CD4-positive, alpha-beta memory T cell (primary cell): ENCODE measurements at regions of chr4 and their contacts with region 1.

Region 1: GRCh38 chr4:139229534-139230039 is 50.4 kb downstream of the MGARP start:
- DNase-seq: peak in 4 of 5 donors; percentile 42 to 54 (median 48)
- H3K4me3 ChIP-seq: no peak overlapping the region
- H3K4me3 Mint-ChIP-seq: no peak overlapping the region
- H3K27ac ChIP-seq: no peak overlapping the region
- H3K27ac Mint-ChIP-seq: no peak overlapping the region
- H3K4me1 ChIP-seq: no peaks in the 10 kb centered on the region
- H3K4me1 Mint-ChIP-seq: peaks cover 0 to 3% (median 1%) of the 10 kb centered on the region in 4 donors
- H3K27me3 ChIP-seq: no peaks in the 10 kb centered on the region
- H3K27me3 Mint-ChIP-seq: no peaks in the 10 kb centered on the region

Region 2: GRCh38 chr4:139099366-139099982 is 130.1 kb before region 1 on chr4:
- CTCF ChIA-PET with region 1: interaction called, 5 read pairs
- POLR2A ChIA-PET with region 1: no interaction called
- intact Hi-C with region 1: loop called (anchors 1 kb)
- DNase-seq: peak; percentile 70 to 78 (median 73)
- H3K4me3 ChIP-seq: no peak overlapping the region
- H3K4me3 Mint-ChIP-seq: no peak overlapping the region
- H3K27ac ChIP-seq: no peak overlapping the region
- H3K27ac Mint-ChIP-seq: peak overlapping the region in 1 of 7 donors; percentile 43
- H3K4me1 ChIP-seq: no peaks in the 10 kb centered on the region
- H3K4me1 Mint-ChIP-seq: peaks cover 0 to 6% (median 3%) of the 10 kb centered on the region in 4 donors
- H3K27me3 ChIP-seq: no peaks in the 10 kb centered on the region
- H3K27me3 Mint-ChIP-seq: no peaks in the 10 kb centered on the region

Region 3: DNA sequence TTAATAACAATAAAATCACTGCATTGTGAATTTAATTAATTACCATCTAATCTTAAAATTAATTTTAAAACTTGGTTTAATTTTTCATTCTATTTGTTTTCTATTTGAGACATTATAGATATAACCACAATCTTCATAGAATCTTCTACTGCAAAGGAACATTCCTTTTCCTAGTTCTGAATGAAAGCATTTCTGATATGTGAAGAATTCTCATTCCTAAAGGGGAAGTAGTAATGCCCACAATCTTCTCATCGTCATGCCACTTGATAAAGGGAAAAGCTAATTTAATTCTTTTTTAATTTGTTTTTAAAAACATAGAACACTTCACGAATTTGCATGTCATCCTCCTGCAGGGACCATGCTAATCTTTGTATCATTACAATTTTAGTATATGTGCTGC is 26.8 kb after region 1 on chr4:
- CTCF ChIA-PET with region 1: interaction called, 10 read pairs
- POLR2A ChIA-PET with region 1: no interaction called
- intact Hi-C with region 1: no loop called
- DNase-seq: no peak
- H3K4me3 ChIP-seq: no peak overlapping the region
- H3K4me3 Mint-ChIP-seq: no peak overlapping the region
- H3K27ac ChIP-seq: no peak overlapping the region
- H3K27ac Mint-ChIP-seq: no peak overlapping the region
- H3K4me1 ChIP-seq: no peaks in the 10 kb centered on the region
- H3K4me1 Mint-ChIP-seq: no peaks in the 10 kb centered on the region
- H3K27me3 ChIP-seq: no peaks in the 10 kb centered on the region
- H3K27me3 Mint-ChIP-seq: no peaks in the 10 kb centered on the region

Region 4: GRCh38 chr4:139295206-139295941 is 65.8 kb after region 1 on chr4:
- CTCF ChIA-PET with region 1: interaction called, 46 read pairs
- POLR2A ChIA-PET with region 1: no interaction called
- intact Hi-C with region 1: loop called (anchors 1 kb)
- DNase-seq: peak; percentile 90 to 96 (median 94)
- H3K4me3 ChIP-seq: peak overlapping the region; percentile 84 to 92
- H3K4me3 Mint-ChIP-seq: peak overlapping the region; percentile 86 to 99 (median 94)
- H3K27ac ChIP-seq: peak overlapping the region; percentile 86
- H3K27ac Mint-ChIP-seq: peak overlapping the region; percentile 93 to 99 (median 97)
- H3K4me1 ChIP-seq: peaks cover 40% of the 10 kb centered on the region
- H3K4me1 Mint-ChIP-seq: peaks cover 14 to 38% (median 25%) of the 10 kb centered on the region in 4 donors
- H3K27me3 ChIP-seq: no peaks in the 10 kb centered on the region
- H3K27me3 Mint-ChIP-seq: no peaks in the 10 kb centered on the region

Region 5: DNA sequence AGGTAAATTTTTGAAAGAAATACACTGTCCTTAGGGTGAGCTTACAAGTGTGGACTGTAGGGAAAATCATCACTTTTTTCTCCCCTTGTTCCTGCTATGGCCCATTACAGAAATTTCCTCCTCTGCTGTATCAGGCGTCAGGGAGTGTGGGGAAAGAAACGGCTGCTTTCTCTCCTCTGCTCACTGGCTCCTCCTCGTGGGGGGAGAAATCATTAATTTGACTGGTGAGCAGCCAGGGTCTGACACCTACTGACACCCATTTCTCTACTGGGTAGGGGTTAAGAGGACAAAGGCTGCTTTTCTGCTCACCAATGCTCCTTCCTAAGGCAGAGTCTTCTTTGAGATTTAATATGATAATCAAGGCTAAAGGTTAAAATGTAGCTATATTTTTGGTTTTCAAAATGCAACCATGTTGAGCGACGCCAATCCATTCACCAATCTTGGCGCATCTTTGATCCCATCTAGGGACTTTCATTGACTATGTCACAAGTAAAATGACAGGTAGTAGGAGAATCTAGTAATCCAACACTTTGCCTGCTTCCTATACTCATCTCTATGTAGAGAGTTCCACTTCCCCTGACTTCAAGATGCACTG is 301.3 kb after region 1 on chr4:
- CTCF ChIA-PET with region 1: interaction called, 3 read pairs
- POLR2A ChIA-PET with region 1: no interaction called
- intact Hi-C with region 1: loop called (anchors 1 kb)
- DNase-seq: peak; percentile 41 to 62 (median 57)
- H3K4me3 ChIP-seq: no peak overlapping the region
- H3K4me3 Mint-ChIP-seq: peak overlapping the region in 1 of 8 donors; percentile 27
- H3K27ac ChIP-seq: no peak overlapping the region
- H3K27ac Mint-ChIP-seq: peak overlapping the region in 4 of 7 donors; percentile 24 to 81 (median 61)
- H3K4me1 ChIP-seq: peaks cover 8% of the 10 kb centered on the region
- H3K4me1 Mint-ChIP-seq: peaks cover 8 to 17% (median 14%) of the 10 kb centered on the region in 4 donors
- H3K27me3 ChIP-seq: no peaks in the 10 kb centered on the region
- H3K27me3 Mint-ChIP-seq: no peaks in the 10 kb centered on the region